GM13977 (cell line): ENCODE measurements at regions of chr2 and their contacts with region 1.

Region 1: DNA sequence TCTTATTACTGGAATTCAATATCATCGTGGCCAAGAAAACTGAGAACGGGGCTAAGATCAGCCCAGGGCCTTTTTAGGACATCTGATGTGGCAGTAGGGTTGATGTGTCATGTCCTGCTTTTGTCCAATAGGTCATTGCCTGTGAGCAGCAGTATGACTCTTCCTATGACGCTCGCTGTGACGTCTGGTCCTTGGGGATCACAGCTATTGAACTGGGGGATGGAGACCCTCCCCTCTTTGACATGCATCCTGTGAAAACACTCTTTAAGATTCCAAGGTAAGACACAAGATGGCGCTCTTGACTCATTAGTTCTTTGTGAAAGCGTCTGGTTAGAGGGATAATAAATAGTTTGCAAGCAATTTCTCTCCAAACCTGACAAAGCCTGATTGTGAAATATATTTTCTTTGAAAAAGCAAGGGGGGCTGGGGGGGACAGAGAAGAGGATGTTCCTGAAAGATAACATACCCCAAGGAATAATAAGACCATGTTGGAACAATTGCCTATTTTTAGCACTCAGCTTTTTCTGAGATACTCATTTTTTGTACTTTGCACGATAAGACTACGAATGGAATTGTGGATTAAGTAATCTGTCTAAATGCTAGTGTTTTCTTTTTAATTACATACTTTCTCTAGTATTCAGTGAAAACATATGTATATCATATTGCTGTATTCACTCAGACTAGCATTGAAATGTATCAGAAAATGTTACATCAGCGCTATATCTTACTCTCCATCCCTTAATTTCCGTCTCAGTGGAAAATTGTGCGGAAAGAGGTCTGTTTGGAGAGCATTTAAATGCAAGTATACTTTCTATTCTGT is 58.1 kb downstream of the MYO3B start:
- DNase-seq: peak; percentile 50
- CTCF ChIP-seq: peak; percentile 62

Region 2: DNA sequence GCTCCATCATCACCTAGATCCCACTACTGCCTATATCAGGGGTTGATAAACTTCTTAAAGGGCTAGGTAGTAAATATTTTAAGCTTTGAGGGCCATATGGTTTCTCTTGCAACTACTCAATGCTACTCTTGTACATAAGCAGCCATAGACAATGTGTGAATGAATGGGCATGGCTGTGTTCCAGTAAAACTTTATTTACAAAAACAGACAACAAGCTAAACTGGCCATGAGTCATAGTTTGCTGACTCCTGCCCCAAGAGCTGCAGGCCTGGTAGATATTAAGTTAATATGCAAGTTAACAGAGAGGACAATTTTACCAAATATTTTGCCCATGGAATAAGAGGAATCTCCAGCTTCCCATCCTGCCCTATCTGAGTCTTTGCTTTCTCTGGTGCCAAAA is 87.9 kb before region 1 on chr2:
- in situ Hi-C with region 1: no loop called
- DNase-seq: no peak
- CTCF ChIP-seq: no peak

Region 3: GRCh38 chr2:170361090-170361936 is 125.2 kb after region 1 on chr2:
- in situ Hi-C with region 1: loop called (anchors 10 kb)
- DNase-seq: peak; percentile 36
- CTCF ChIP-seq: peak; percentile 85